ENCODE measurements at regions of chr9 and their contacts with region 1.

Region 1: DNA sequence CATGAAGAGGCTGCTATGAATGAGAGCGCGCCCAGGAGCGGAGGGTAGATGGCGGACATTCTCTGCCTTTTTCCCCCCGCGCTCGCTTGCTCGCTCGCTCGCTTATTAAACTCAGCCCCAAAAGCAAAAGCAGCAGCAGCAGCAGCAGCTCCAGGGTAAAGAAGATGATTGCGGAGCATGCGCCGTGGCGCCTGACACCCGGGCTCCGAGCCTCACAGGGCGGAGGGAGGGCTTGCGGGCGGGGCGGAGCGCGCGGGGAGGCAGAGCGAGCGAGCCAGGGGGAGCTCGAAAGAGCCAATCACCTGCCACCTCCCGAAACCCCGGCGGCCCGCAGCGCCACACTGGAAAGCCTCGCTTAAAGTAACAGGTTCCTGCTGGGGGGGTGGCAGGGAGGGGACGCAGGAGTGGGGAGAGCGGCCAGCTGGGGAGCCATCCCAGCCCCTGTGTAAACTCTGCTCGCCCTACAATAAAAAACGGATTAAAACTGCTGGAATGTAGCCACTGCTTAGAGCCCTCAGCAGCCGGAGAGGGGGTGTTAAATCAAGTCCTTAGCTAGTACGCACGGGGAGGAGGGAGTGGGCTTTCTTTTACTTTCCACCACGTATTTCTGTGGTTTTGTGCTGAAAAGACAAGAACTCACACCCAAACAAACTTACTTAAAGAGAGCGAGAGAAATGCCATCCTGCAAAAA is at the start of gene MLLT3:
- DNase-seq: peak; percentile 98
- ATAC-seq: peak; percentile 97
- total RNA-seq, gene MLLT3: 14.6 TPM

Region 2: GRCh38 chr9:20356403-20357035 is 266.0 kb before region 1 on chr9:
- intact Hi-C with region 1: loop called (anchors 2 kb)
- DNase-seq: peak; percentile 53
- ATAC-seq: peak; percentile 80

Region 3: GRCh38 chr9:20552874-20553575 is 69.5 kb before region 1 on chr9:
- intact Hi-C with region 1: loop called (anchors 5 kb)
- DNase-seq: no peak
- ATAC-seq: no peak

Region 4: DNA sequence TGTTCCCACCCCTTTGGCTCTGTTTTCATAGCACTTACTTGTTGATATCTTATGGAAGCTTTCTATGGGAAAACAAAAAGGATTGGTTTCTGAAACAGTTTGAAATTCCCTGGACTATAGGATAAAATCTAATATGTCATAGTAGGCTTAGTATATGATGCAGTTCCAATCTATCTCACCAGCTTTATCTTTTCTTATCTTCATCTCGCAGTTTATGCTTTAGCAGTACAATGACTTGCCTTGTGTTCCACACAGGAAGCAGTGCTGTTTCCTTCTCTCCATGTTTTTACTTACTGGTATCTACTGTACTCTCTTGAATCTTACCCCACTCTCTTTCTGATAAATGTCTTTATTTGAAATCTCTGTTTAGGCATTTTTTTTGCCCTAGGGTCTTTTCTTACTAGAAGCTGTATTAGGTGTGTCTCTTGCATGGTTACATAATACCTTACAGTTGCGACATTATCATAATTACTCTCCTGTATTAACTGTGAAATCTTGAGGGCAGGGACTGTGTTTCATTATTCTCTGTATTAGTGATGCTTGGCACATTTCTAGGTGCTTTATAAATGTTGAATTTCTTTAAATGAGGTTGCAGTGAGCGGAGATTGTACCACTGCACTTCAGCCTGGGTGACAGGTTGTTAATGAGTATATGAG is 137.9 kb after region 1 on chr9:
- intact Hi-C with region 1: loop called (anchors 10 kb)
- DNase-seq: no peak
- ATAC-seq: no peak

Region 5: DNA sequence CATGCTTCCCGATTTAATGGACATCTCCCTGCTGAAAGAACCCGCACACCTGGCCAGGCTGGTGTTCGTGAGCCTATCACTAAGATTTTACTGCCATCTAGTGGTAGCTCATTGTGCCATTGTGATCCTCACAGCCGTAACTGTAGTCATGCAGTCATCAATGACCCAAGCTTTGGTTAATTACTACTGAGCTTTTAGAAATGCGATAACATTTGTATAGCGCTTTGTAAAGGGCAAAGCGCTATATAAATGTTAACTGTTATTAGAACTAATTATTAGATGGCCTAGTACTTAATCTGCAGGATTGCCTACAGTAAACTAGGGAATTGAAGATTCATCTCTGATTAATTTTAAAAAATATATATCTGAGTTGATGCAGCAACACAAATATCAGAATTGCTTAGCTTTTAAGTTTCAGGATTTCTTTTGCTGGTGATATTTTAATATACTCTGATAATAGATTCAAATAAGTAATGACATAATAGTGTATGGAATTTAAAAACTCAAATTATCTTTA is 318.8 kb after region 1 on chr9:
- intact Hi-C with region 1: loop called (anchors 5 kb)
- DNase-seq: no peak
- ATAC-seq: peak; percentile 89